ENCODE measurements at regions of chr6 and their contacts with region 1.

Region 1: DNA sequence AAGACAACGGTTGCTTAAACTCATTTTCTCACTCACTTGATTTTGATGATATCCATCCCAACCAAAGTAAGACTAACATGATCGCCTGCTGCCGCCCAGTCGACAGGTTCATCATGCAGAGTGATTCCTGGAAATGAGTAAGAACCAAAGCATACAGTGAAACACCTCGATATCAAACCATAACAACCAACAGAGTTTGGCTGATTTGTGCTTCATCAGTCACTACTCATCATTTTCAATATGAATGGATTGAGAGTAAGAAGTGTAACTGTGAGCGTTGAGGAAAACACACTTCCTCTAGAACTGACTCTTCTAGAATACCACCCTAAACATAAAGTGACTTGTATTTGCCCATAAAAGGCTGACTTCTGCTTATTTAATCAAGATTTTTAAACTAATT is 29.2 kb upstream of the ALDH8A1 start:
- DNase-seq: peak; percentile 81
- H3K4me3 Mint-ChIP-seq: peak overlapping the region; percentile 14
- H3K27ac Mint-ChIP-seq: peak overlapping the region; percentile 71
- H3K4me1 Mint-ChIP-seq: peaks cover 39% of the 10 kb centered on the region
- H3K27me3 Mint-ChIP-seq: no peaks in the 10 kb centered on the region

Region 2: GRCh38 chr6:134954272-134955000 is 24.7 kb before region 1 on chr6:
- intact Hi-C with region 1: loop called (anchors 1 kb)
- DNase-seq: no peak
- H3K4me3 Mint-ChIP-seq: no peak overlapping the region
- H3K27ac Mint-ChIP-seq: no peak overlapping the region
- H3K4me1 Mint-ChIP-seq: peaks cover 13% of the 10 kb centered on the region
- H3K27me3 Mint-ChIP-seq: no peaks in the 10 kb centered on the region

Region 3: GRCh38 chr6:135002974-135003703 is 24.0 kb after region 1 on chr6:
- intact Hi-C with region 1: loop called (anchors 1 kb)
- DNase-seq: no peak
- H3K4me3 Mint-ChIP-seq: peak overlapping the region; percentile 12
- H3K27ac Mint-ChIP-seq: no peak overlapping the region
- H3K4me1 Mint-ChIP-seq: peaks cover 15% of the 10 kb centered on the region
- H3K27me3 Mint-ChIP-seq: no peaks in the 10 kb centered on the region

Region 4: DNA sequence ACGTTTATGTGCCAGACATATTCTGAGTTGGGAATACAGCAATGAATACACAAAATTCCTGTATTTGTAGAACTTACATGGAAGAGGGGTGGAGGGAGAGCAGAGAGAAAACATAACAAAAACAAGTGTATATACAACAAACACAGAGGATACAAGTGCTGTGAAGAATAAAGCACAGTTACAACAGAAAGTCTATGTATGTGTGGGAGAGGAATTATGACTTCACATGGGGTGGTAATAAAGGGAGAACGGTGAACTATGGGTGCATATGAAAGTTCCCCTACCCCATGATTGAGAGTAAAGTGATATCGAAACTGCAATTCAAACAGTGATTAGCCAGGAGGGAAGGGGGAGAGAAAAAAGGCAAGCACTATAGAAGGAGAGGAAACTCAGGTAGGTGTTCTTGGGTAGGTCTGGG is 50.9 kb after region 1 on chr6:
- intact Hi-C with region 1: loop called (anchors 1 kb)
- DNase-seq: peak; percentile 76
- H3K4me3 Mint-ChIP-seq: peak overlapping the region; percentile 52
- H3K27ac Mint-ChIP-seq: peak overlapping the region; percentile 80
- H3K4me1 Mint-ChIP-seq: peaks cover 46% of the 10 kb centered on the region
- H3K27me3 Mint-ChIP-seq: no peaks in the 10 kb centered on the region

Region 5: DNA sequence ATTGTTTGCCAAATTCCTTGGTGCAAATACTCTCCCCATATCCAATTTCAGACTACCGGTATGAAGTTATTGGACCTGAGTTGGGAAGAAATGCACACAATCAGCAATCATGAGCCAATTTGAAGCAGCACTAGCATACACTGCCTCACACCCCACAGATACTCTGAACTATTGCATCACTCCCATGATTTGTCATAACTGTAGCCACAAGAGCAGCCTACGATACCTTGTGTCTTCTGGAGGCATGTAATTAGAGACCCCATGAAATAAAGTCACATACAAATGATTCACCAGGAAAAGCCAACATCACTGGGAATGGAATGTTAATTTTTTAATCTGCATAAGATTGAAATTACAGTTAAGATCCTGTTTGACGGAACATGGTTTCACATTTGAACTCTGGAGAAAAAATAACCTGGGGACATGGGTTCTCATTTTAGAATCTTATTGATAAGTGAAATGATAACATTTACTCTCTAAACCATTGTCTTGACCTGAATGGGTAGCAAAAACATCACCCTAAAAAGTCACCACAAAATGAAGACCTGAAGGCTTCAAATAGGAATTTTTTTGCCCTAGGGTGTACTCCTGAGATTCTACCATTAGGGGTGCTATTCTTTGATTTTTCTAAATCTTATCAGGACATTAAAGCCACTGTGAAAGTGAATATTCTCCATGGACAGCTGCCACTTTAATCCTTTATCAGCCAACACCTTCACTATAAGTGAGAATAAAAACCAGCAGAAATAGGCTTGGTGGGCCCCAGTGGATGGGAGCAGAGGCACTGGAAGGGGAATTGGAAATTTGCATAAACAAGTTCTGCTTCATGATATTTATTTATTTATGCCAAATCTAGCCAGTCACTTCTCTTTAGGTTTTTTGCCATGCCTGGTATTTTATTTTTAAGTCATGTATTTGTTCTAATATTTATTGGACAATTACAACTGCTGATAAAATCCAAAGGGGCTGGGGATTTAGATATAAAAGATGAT is 110.0 kb after region 1 on chr6:
- intact Hi-C with region 1: loop called (anchors 1 kb)
- DNase-seq: peak; percentile 85
- H3K4me3 Mint-ChIP-seq: peak overlapping the region; percentile 59
- H3K27ac Mint-ChIP-seq: peak overlapping the region; percentile 90
- H3K4me1 Mint-ChIP-seq: peaks cover 75% of the 10 kb centered on the region
- H3K27me3 Mint-ChIP-seq: no peaks in the 10 kb centered on the region

Measured in activated CD4-positive, alpha-beta T cell treated with anti-CD3 and anti-CD28 coated beads, Interleukin-2, amount 10 ng/mL, durations not matched to agents 24 days and 14 days (primary cell).